IMR-90 (cell line): ENCODE measurements at regions of chr14 and their contacts with region 1.

Region 1: GRCh38 chr14:80850197-80850814 is 91.2 kb downstream of the CEP128 start:
- DNase-seq: peak; percentile 68
- ATAC-seq: peak; percentile 78
- H3K4me3 ChIP-seq: no peak overlapping the region
- H3K27ac ChIP-seq: no peak overlapping the region
- H3K4me1 ChIP-seq: peaks cover 2% of the 10 kb centered on the region; the same call in 1 of the 2 replicates
- H3K27me3 ChIP-seq: no peaks in the 10 kb centered on the region
- CTCF ChIP-seq: peak; percentile 75
- POLR2A ChIP-seq: no peak
- RAD21 ChIP-seq: peak; percentile 78

Region 2: GRCh38 chr14:78967110-78967809 is 1883.0 kb before region 1 on chr14:
- CTCF ChIA-PET with region 1: no interaction called
- POLR2A ChIA-PET with region 1: no interaction called
- dilution Hi-C with region 1: no loop called
- in situ Hi-C with region 1: loop called (anchors 25 kb)
- intact Hi-C with region 1: loop called (anchors 5 kb)
- DNase-seq: peak; percentile 85
- ATAC-seq: peak; percentile 37; the same call in 1 of the 2 replicates
- H3K4me3 ChIP-seq: no peak overlapping the region
- H3K27ac ChIP-seq: peak overlapping the region; percentile 47; the same call in 1 of the 2 replicates
- H3K4me1 ChIP-seq: peaks cover 5% of the 10 kb centered on the region; the same call in 1 of the 2 replicates
- H3K27me3 ChIP-seq: no peaks in the 10 kb centered on the region
- CTCF ChIP-seq: no peak
- POLR2A ChIP-seq: no peak
- RAD21 ChIP-seq: no peak

Region 3: DNA sequence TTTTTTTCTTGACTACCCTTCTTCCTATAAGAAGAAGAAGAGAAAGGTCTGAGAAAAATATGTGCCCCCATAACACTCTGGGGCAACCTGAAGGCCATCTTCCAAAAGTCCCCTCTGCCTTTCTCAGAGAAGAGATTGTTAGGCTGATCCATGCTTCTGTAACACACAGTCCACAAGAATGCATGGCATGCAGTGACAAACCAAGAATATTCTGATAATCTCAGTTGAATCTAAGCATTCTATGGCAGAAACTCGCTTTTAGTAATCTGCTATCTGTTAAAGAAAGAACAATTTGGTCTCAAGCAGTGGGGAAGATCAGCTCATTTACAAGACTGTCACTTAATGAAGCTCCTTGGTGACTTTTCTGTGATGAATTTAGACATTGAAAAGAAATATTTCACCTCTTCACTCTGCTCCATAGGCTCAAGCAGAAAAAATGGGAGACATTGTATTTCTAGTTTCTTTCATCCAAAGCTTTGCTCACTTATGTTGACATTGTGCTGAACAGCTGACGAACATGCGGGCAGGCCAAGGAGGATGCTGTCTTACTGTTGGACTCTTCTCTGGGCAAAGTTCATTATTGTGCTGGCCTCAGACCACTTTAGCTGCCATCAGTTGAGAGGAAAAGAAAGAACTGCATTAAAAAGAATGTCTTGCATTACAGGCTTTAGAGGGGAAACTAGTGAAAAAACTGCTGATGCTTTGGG is 1596.1 kb before region 1 on chr14:
- CTCF ChIA-PET with region 1: no interaction called
- POLR2A ChIA-PET with region 1: no interaction called
- dilution Hi-C with region 1: no loop called
- in situ Hi-C with region 1: loop called (anchors 25 kb)
- intact Hi-C with region 1: no loop called
- DNase-seq: peak; percentile 66
- ATAC-seq: peak; percentile 91
- H3K4me3 ChIP-seq: no peak overlapping the region
- H3K27ac ChIP-seq: no peak overlapping the region
- H3K4me1 ChIP-seq: peaks cover 2% of the 10 kb centered on the region; the same call in 1 of the 2 replicates
- H3K27me3 ChIP-seq: no peaks in the 10 kb centered on the region
- CTCF ChIP-seq: no peak
- POLR2A ChIP-seq: no peak
- RAD21 ChIP-seq: no peak

Region 4: GRCh38 chr14:80364274-80364673 is 486.0 kb before region 1 on chr14:
- CTCF ChIA-PET with region 1: no interaction called
- POLR2A ChIA-PET with region 1: no interaction called
- dilution Hi-C with region 1: no loop called
- in situ Hi-C with region 1: no loop called
- intact Hi-C with region 1: loop called (anchors 1 kb)
- DNase-seq: peak; percentile 21
- ATAC-seq: no peak
- H3K4me3 ChIP-seq: no peak overlapping the region
- H3K27ac ChIP-seq: no peak overlapping the region
- H3K4me1 ChIP-seq: no peaks in the 10 kb centered on the region
- H3K27me3 ChIP-seq: no peaks in the 10 kb centered on the region
- CTCF ChIP-seq: peak; percentile 35
- POLR2A ChIP-seq: no peak
- RAD21 ChIP-seq: peak; percentile 34; the same call in 1 of the 2 replicates